ENCODE measurements at regions of chr17 and their contacts with region 1.

Region 1: GRCh38 chr17:35764123-35764991 is 3.7 kb downstream of the C17orf50 start:
- DNase-seq: peak; percentile 73 to 92
- H3K4me3 ChIP-seq: peak overlapping the region; percentile 43; the same call in 1 of the 2 replicates
- H3K27ac ChIP-seq: no peak overlapping the region
- H3K4me1 ChIP-seq: no peaks in the 10 kb centered on the region
- H3K27me3 ChIP-seq: peaks cover 50% of the 10 kb centered on the region
- CTCF ChIP-seq: peak; percentile 79

Region 2: DNA sequence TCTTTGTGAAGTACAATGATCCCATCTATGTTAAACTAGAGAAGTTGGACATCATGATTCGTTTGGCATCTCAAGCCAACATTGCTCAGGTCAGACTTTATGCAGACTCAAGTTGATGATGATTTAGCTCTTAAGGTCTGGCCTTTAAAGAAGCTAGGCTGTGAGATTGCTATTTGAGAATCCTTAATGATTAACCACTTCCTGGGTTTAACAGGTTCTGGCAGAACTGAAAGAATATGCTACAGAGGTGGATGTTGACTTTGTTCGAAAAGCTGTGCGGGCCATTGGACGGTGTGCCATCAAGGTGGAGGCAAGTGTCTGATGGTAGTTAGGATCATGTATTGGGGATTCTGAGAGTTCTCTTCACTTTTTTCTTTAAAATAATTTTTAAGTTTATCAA is 136.9 kb before region 1 on chr17:
- CTCF ChIA-PET with region 1: no interaction called
- POLR2A ChIA-PET with region 1: no interaction called
- intact Hi-C with region 1: no loop called
- DNase-seq: no peak
- H3K4me3 ChIP-seq: no peak overlapping the region
- H3K27ac ChIP-seq: no peak overlapping the region
- H3K4me1 ChIP-seq: no peaks in the 10 kb centered on the region
- H3K27me3 ChIP-seq: no peaks in the 10 kb centered on the region
- CTCF ChIP-seq: no peak

Region 3: DNA sequence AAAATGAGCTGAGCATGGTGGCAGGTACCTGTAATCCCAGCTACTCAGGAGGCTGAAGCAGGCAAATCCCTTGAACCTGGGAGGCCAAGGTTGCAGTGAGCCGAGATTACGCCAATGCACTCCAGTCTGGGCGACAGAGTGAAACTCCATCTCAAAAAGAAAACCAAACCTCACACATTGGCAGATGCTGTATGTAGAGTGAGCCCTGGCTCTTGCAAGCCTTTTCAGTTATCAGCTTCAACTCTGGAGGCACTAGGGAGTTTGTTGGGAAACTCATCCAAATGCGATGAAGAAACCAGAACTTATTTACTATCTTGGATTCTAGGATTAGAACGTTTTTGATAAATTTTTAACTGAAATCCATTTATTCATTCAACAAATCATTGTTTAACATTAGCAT is 89.8 kb before region 1 on chr17:
- CTCF ChIA-PET with region 1: no interaction called
- POLR2A ChIA-PET with region 1: interaction called, 15 read pairs
- intact Hi-C with region 1: no loop called
- DNase-seq: no peak
- H3K4me3 ChIP-seq: no peak overlapping the region
- H3K27ac ChIP-seq: no peak overlapping the region
- H3K4me1 ChIP-seq: no peaks in the 10 kb centered on the region
- H3K27me3 ChIP-seq: no peaks in the 10 kb centered on the region
- CTCF ChIP-seq: no peak

Region 4: DNA sequence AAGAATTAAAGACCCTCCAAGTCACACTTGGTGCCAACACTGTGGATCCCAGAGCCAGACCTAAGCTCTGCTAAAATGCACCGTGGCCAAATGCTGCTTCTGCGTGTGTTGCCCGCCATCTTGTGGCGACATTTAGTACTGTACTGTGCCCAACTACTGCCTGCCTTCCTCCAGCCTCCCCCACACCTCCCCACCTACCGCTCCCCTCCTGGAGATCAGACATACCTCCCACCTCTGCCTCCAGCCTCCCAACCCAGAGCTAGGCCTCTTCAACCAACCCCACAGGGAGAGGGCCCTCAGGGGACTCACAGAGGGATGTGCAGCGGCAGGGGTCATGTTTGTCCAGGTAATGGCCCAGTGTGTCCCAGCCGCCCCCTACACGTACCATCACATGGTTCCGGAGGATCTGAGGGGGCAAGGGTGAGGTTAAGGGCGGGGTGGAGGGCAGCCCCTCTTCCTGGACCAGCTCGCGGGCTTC is 16.8 kb before region 1 on chr17:
- CTCF ChIA-PET with region 1: no interaction called
- POLR2A ChIA-PET with region 1: no interaction called
- intact Hi-C with region 1: no loop called
- DNase-seq: peak in 1 of 2 experiments; percentile 68
- H3K4me3 ChIP-seq: no peak overlapping the region
- H3K27ac ChIP-seq: no peak overlapping the region
- H3K4me1 ChIP-seq: no peaks in the 10 kb centered on the region
- H3K27me3 ChIP-seq: peaks cover 44% of the 10 kb centered on the region
- CTCF ChIP-seq: peak; percentile 89

Region 5: DNA sequence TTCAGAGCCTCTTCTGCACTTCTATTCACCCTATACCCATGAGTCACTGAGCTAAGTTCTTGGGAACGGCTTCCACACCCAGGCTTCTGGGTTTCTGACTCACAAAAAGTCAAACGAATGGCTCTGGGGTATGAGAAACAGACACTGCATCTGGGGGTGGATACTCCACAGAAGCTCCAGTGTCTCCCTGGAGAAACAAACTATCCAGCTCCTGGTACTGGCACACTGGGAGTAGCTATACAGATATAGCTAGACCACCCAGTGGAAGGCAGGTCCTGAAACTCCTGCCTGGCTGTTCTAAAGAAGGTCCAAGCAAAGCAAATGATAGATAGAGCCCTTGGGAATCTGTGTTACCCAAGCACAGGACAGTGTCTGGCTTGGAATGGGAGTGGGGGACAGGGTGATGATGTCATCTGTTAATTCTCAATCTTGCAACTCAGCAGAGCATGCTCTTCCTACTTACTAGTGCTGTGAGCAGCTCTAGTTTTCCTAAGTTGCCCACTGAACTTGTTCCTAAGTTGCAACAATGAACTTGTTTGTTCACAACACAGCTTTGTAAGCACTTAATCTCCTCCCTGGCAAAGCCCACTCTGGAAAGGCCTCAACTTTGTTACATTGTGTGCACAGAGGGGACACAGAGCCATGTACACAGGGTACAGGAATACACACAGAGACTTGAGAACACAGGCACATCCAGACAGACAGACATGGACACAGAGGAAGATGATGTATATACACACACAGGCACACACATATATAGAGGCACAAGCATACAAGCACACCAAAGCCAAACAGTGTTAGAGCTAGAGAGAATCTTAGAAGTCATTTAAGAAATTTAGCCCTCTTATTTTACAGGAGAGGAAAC is 24.4 kb after region 1 on chr17:
- CTCF ChIA-PET with region 1: interaction called, 12 read pairs
- POLR2A ChIA-PET with region 1: no interaction called
- intact Hi-C with region 1: no loop called
- DNase-seq: peak in 1 of 2 experiments; percentile 85
- H3K4me3 ChIP-seq: no peak overlapping the region; the same call in 1 of the 2 replicates
- H3K27ac ChIP-seq: peak overlapping the region; percentile 80
- H3K4me1 ChIP-seq: peaks cover 66% of the 10 kb centered on the region
- H3K27me3 ChIP-seq: peaks cover 6% of the 10 kb centered on the region; the same call in 1 of the 2 replicates
- CTCF ChIP-seq: no peak

Region 6: GRCh38 chr17:35808962-35809854 is 44.9 kb after region 1 on chr17 and contains the start of gene TAF15:
- CTCF ChIA-PET with region 1: interaction called, 19 read pairs
- POLR2A ChIA-PET with region 1: interaction called, 5 read pairs
- intact Hi-C with region 1: loop called (anchors 1 kb)
- DNase-seq: peak; percentile 94 to 95
- H3K4me3 ChIP-seq: peak within 1 kb of the TSS; percentile 97
- H3K27ac ChIP-seq: peak within 1 kb of the TSS; percentile 98
- H3K4me1 ChIP-seq: peaks cover 39% of the 10 kb centered on the region
- H3K27me3 ChIP-seq: no peaks in the 10 kb centered on the region
- CTCF ChIP-seq: peak; percentile 72
- total RNA-seq, gene TAF15: 187 and 202 TPM in 2 replicates

Region 7: DNA sequence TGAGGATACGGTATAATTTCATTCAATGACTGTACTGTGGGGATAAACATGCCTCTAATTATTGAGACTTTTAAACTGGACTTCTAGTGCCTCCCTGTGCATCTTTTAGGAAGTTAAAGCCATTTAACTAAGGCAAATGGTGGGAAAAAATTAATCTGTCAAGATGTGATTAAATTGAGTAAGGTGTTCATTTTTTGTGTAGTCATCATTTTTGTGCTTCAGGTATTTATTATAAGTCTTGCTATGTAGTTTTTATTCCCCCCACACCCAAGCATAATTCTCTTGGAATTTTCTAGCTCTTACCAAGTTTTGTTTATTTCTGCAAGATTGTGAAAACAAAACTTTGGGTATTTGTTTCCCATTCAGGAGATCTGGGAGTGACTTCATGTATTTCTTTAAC is 55.1 kb after region 1 on chr17:
- CTCF ChIA-PET with region 1: interaction called, 19 read pairs
- POLR2A ChIA-PET with region 1: no interaction called
- intact Hi-C with region 1: no loop called
- DNase-seq: no peak
- H3K4me3 ChIP-seq: no peak overlapping the region
- H3K27ac ChIP-seq: no peak overlapping the region
- H3K4me1 ChIP-seq: no peaks in the 10 kb centered on the region
- H3K27me3 ChIP-seq: no peaks in the 10 kb centered on the region
- CTCF ChIP-seq: no peak

Measured in PC-9 (cell line).